ENCODE measurements at regions of chr2 and their contacts with region 1.

Region 1: GRCh38 chr2:203484266-203485112 is 50.6 kb downstream of the RAPH1 start:
- DNase-seq: peak; percentile 14 to 28
- ATAC-seq: peak; percentile 85
- H3K4me3 ChIP-seq: no peak overlapping the region
- H3K27ac ChIP-seq: no peak overlapping the region
- H3K4me1 ChIP-seq: peaks cover 0 to 6% of the 10 kb centered on the region in 2 donors
- H3K27me3 ChIP-seq: no peaks in the 10 kb centered on the region
- CTCF ChIP-seq: peak; percentile 53 to 78 (median 68)
- POLR2A ChIP-seq: no peak

Region 2: GRCh38 chr2:203636588-203637470 is 152.3 kb after region 1 on chr2:
- in situ Hi-C with region 1: no loop called
- intact Hi-C with region 1: loop called (anchors 1 kb)
- DNase-seq: peak; percentile 58 to 72
- ATAC-seq: peak; percentile 99 to 100
- H3K4me3 ChIP-seq: no peak overlapping the region
- H3K27ac ChIP-seq: peak overlapping the region; percentile 53 to 63 (median 60)
- H3K4me1 ChIP-seq: peaks cover 11 to 14% of the 10 kb centered on the region in 2 donors
- H3K27me3 ChIP-seq: no peaks in the 10 kb centered on the region
- CTCF ChIP-seq: no peak
- POLR2A ChIP-seq: no peak

Region 3: DNA sequence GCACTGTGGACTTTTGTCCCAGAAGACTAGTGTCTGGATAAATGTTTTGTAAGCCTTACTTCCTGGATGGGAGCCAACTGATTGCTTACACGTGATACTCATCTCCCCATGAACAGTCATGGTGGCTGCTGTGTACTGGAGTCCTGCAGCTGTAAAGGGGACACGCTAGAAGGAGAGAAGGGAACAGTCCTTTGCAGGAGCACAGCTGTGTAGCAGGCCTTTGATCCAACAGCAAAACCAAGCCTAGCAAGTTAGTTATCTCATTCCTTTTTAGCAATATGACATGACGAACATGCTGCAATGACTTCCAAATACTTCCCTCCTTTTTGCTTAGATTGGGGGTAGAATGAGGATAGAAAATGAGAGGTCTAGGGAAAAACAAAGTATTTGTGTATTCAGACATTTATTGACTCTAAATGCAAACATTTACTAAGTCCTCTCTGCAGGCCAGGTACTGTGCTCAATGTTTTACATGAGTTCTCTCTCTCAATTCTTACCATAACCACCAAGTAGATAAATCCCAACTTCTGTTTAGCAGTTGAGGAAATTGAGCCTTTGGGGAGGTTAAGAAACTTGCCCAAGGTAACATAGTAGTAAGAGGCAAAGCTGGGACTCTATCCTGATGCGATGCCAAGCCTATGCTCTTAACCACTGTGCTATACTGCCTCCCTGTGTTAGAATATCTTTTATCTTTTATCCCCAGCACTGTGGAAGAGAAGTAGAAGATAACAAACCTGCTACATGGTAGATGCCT is 166.5 kb after region 1 on chr2:
- in situ Hi-C with region 1: loop called in 1 of 4 experiments (anchors 10 kb)
- intact Hi-C with region 1: loop called (anchors 1 kb)
- DNase-seq: peak; percentile 28 to 29
- ATAC-seq: peak; percentile 82 to 90
- H3K4me3 ChIP-seq: no peak overlapping the region
- H3K27ac ChIP-seq: peak overlapping the region in 3 of 4 donors; percentile 52 to 64 (median 54)
- H3K4me1 ChIP-seq: peaks cover 20 to 36% of the 10 kb centered on the region in 2 donors
- H3K27me3 ChIP-seq: no peaks in the 10 kb centered on the region
- CTCF ChIP-seq: peak in 4 of 5 experiments; percentile 10 to 45 (median 42)
- POLR2A ChIP-seq: no peak

Region 4: GRCh38 chr2:203740780-203741281 is 256.3 kb after region 1 on chr2:
- in situ Hi-C with region 1: no loop called
- intact Hi-C with region 1: no loop called
- DNase-seq: no peak
- ATAC-seq: no peak
- H3K4me3 ChIP-seq: no peak overlapping the region
- H3K27ac ChIP-seq: peak overlapping the region in 2 of 4 donors; percentile 20 to 38
- H3K4me1 ChIP-seq: peaks cover 3 to 16% of the 10 kb centered on the region in 2 donors
- H3K27me3 ChIP-seq: no peaks in the 10 kb centered on the region
- CTCF ChIP-seq: no peak
- POLR2A ChIP-seq: no peak

Region 5: GRCh38 chr2:203763938-203764664 is 279.6 kb after region 1 on chr2:
- in situ Hi-C with region 1: no loop called
- intact Hi-C with region 1: no loop called
- DNase-seq: no peak
- ATAC-seq: no peak
- H3K4me3 ChIP-seq: no peak overlapping the region
- H3K27ac ChIP-seq: no peak overlapping the region
- H3K4me1 ChIP-seq: peaks cover 0 to 13% of the 10 kb centered on the region in 2 donors
- H3K27me3 ChIP-seq: no peaks in the 10 kb centered on the region
- CTCF ChIP-seq: no peak
- POLR2A ChIP-seq: no peak

Region 6: DNA sequence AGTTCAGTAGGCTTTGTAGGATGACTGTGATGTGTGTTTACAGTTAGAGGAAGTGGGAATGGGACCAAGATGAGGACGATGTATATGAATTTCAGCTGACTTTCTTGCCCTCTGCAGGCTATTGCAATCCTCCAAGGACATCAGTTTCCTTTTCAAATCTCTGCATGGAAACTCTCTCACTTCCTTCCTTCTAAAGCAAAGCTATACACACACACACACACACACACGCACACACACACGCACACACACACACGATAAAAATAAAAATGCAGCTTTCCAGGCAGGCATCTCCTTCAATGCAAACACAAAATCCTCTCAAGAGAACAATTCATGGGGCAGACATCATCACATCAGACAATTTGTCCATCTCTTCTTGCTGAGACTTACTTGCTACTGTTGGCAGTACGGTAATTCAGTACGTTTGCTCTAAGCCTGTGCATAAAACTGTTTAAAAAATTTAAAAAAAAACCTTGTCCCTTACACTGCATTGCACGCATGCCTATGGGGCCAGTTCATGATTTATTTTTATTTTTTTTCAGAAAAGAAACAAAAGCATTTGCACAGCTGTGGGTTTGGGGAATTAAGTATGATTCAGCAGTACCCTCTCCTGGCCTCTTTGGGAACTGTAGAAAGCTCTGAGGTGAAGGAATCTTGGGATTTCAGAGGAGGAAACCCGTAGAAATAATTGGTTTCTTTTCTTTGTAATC is 424.9 kb after region 1 on chr2:
- in situ Hi-C with region 1: loop called in 2 of 4 experiments (anchors 10 to 25 kb)
- intact Hi-C with region 1: loop called (anchors 1 kb)
- DNase-seq: no peak
- ATAC-seq: peak; percentile 64 to 78
- H3K4me3 ChIP-seq: peak overlapping the region; percentile 5 to 47 (median 29)
- H3K27ac ChIP-seq: peak overlapping the region in 2 of 4 donors; percentile 24 to 61
- H3K4me1 ChIP-seq: peaks cover 13 to 18% of the 10 kb centered on the region in 2 donors
- H3K27me3 ChIP-seq: no peaks in the 10 kb centered on the region
- CTCF ChIP-seq: peak; percentile 49 to 73 (median 65)
- POLR2A ChIP-seq: no peak

Measured in gastrocnemius medialis (tissue), 4 donors.